B cell (primary cell): ENCODE measurements at regions of chr4 and their contacts with region 1.

Region 1: DNA sequence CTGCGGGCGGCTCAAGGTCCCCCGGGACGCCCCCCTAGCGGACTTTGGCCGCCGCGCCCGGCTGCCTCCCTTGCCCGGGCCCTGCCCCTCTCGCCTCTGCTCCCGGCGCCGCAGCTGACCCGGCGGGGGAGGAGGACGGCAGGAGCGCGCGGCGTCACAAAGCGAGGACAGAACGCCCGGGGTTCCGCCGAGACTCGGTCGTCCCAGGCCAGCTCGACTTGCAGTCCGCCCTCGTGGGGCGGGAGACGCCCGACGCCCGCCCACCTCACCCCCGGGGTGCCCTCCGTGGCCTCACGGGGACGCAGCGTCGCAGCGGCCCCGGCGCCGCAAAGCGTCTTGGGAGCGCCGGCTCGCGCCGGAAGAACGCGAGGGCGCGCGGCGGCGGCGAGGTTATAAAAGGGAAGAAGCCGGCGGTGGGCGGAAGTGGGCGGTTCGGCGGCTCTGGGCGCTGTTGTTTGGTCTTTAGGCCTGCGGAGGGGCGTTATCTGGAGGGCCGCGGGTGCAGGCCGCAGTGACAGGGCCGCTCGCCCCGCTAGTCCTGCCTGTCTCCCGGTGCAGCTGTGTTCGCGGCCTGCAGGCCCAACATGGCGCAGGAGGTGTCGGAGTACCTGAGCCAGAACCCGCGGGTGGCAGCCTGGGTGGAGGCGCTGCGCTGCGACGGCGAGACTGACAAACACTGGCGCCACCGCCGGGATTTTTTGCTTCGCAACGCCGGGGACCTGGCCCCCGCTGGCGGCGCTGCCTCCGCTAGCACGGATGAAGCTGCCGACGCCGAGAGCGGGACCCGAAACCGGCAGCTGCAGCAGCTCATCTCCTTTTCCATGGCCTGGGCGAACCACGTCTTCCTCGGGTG is at the start of gene CDKN2AIP:
- DNase-seq: peak; percentile 98
- ATAC-seq: peak; percentile 85
- H3K4me3 ChIP-seq: peak within 1 kb of the TSS; percentile 79 to 93 (median 82)
- H3K4me3 Mint-ChIP-seq: peak within 1 kb of the TSS; percentile 98
- H3K27ac ChIP-seq: peak within 1 kb of the TSS; percentile 78 to 95
- H3K27ac Mint-ChIP-seq: peak within 1 kb of the TSS; percentile 99
- H3K4me1 ChIP-seq: peaks cover 14 to 22% of the 10 kb centered on the region in 2 donors
- H3K4me1 Mint-ChIP-seq: peaks cover 33% of the 10 kb centered on the region
- H3K27me3 ChIP-seq: no peaks in the 10 kb centered on the region
- H3K27me3 Mint-ChIP-seq: no peaks in the 10 kb centered on the region
- CTCF ChIP-seq: peak; percentile 5
- total RNA-seq, gene CDKN2AIP: 36.0 and 42.6 TPM in 2 replicates

Region 2: DNA sequence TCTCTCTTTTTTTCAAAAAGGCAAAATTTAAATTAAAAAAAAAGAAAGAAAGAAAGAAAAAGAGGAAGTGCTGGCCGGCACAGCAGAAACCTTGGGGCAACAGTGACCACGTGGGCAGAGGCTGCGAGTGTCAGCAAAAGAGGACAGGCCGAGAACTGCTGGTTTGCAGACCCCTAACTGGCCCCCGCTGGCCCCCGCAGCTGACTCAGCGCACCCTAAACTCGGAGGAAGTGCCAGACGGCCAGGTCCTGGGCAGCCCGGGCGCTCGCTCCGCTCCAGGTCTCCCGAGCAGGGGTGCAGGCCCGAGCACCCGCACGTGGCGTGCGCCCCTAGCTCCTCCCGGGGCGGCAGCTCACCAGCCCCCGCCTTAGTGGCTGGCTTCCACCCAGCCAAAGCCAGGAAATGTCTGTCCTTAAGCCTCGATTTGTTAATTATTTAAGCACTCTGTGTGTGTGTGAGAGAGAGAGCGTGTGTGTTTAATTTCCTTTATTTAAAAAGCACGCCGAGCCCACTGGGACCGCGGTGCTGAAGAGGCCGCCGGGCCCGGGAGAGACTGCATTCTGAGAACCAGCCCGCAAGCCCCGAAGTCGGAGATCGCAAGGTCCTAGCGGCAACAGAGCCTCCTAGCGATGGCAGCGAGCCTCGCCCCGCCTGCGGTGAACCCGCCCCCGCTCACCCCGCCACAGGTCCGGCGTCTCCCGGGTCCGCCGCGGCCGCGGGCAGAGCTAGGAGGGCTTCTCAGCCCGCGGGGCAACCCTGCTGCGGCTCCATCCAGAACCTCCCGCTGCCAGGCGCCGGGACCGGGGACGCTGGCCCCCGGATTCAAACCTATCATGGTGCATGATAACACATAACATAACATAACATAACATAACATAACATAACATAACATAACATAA is 46.0 kb before region 1 on chr4:
- CTCF ChIA-PET with region 1: interaction called, 3 read pairs
- POLR2A ChIA-PET with region 1: no interaction called
- intact Hi-C with region 1: loop called (anchors 1 kb)
- DNase-seq: peak; percentile 74
- ATAC-seq: peak; percentile 84
- H3K4me3 ChIP-seq: peak overlapping the region; percentile 32 to 76 (median 65)
- H3K4me3 Mint-ChIP-seq: peak overlapping the region; percentile 87
- H3K27ac ChIP-seq: peak overlapping the region in 1 of 2 donors; percentile 56
- H3K27ac Mint-ChIP-seq: peak overlapping the region; percentile 50
- H3K4me1 ChIP-seq: peaks cover 12 to 23% of the 10 kb centered on the region in 2 donors
- H3K4me1 Mint-ChIP-seq: peaks cover 24% of the 10 kb centered on the region
- H3K27me3 ChIP-seq: peaks cover 0 to 9% (median 2%) of the 10 kb centered on the region in 4 experiments
- H3K27me3 Mint-ChIP-seq: peaks cover 13% of the 10 kb centered on the region
- CTCF ChIP-seq: no peak

Region 3: DNA sequence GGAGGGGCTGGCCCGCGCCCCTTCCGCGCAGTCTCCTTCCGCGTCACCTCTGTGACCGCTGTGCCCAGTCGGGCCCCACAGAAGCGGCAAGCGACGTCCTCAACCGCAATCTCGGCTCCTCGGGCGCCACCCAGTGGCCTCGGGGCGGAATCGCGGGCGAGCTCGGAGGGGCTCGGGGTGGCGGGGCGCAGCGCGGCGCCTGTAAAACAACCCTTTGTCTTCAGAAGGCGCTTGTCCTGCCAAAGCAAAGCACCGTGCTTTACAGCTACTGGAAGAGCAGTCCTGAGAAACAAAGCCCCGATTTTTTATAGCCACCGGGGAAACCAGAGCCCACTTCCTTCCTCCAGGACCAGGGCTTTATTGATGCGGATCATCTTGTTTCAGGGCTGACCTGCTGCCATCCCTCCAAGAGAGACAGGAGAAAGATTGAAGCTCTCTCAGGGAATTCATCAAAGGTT is 37.3 kb before region 1 on chr4:
- CTCF ChIA-PET with region 1: interaction called, 13 read pairs
- POLR2A ChIA-PET with region 1: interaction called, 14 read pairs
- intact Hi-C with region 1: loop called (anchors 1 kb)
- DNase-seq: peak; percentile 89
- ATAC-seq: peak; percentile 99
- H3K4me3 ChIP-seq: peak overlapping the region in 4 of 5 experiments; percentile 58 to 74 (median 62)
- H3K4me3 Mint-ChIP-seq: peak overlapping the region; percentile 80
- H3K27ac ChIP-seq: peak overlapping the region; percentile 53 to 68
- H3K27ac Mint-ChIP-seq: peak overlapping the region; percentile 70
- H3K4me1 ChIP-seq: peaks cover 5 to 10% of the 10 kb centered on the region in 2 donors
- H3K4me1 Mint-ChIP-seq: peaks cover 17% of the 10 kb centered on the region
- H3K27me3 ChIP-seq: no peaks in the 10 kb centered on the region
- H3K27me3 Mint-ChIP-seq: no peaks in the 10 kb centered on the region
- CTCF ChIP-seq: peak; percentile 87

Region 4: GRCh38 chr4:183659029-183659871 is 214.8 kb after region 1 on chr4 and contains the starts of genes RWDD4 and TRAPPC11:
- CTCF ChIA-PET with region 1: no interaction called
- POLR2A ChIA-PET with region 1: no interaction called
- intact Hi-C with region 1: loop called (anchors 1 kb)
- DNase-seq: peak; percentile 97
- ATAC-seq: peak; percentile 98
- H3K4me3 ChIP-seq: peak within 1 kb of the TSS; percentile 62 to 91 (median 87)
- H3K4me3 Mint-ChIP-seq: peak within 1 kb of the TSS; percentile 93
- H3K27ac ChIP-seq: peak within 1 kb of the TSS; percentile 70 to 90
- H3K27ac Mint-ChIP-seq: peak within 1 kb of the TSS; percentile 93
- H3K4me1 ChIP-seq: peaks cover 17 to 24% of the 10 kb centered on the region in 2 donors
- H3K4me1 Mint-ChIP-seq: peaks cover 26% of the 10 kb centered on the region
- H3K27me3 ChIP-seq: no peaks in the 10 kb centered on the region
- H3K27me3 Mint-ChIP-seq: no peaks in the 10 kb centered on the region
- CTCF ChIP-seq: no peak
- total RNA-seq, gene RWDD4: 15.7 and 16.3 TPM in 2 replicates
- total RNA-seq, gene TRAPPC11: 53.8 and 56.6 TPM in 2 replicates

Region 5: GRCh38 chr4:184733654-184734524 is 1289.4 kb after region 1 on chr4 and contains the start of gene CENPU:
- CTCF ChIA-PET with region 1: no interaction called
- POLR2A ChIA-PET with region 1: no interaction called
- intact Hi-C with region 1: loop called (anchors 5 kb)
- DNase-seq: peak; percentile 96
- ATAC-seq: peak; percentile 95
- H3K4me3 ChIP-seq: peak within 1 kb of the TSS; percentile 65 to 76 (median 72)
- H3K4me3 Mint-ChIP-seq: peak within 1 kb of the TSS; percentile 93
- H3K27ac ChIP-seq: peak within 1 kb of the TSS; percentile 1 to 52
- H3K27ac Mint-ChIP-seq: peak within 1 kb of the TSS; percentile 93
- H3K4me1 ChIP-seq: peaks cover 7 to 12% of the 10 kb centered on the region in 2 donors
- H3K4me1 Mint-ChIP-seq: peaks cover 16% of the 10 kb centered on the region
- H3K27me3 ChIP-seq: no peaks in the 10 kb centered on the region
- H3K27me3 Mint-ChIP-seq: no peaks in the 10 kb centered on the region
- CTCF ChIP-seq: no peak
- total RNA-seq, gene CENPU: 1.6 and 3.2 TPM in 2 replicates